Activated naive CD8-positive, alpha-beta T cell treated with anti-CD3 and anti-CD28 coated beads, Interleukin-2, amount 10 ng/mL, durations not matched to agents 7 days and 5 days (primary cell): ENCODE measurements at regions of chr7 and their contacts with region 1.

Region 1: GRCh38 chr7:48109848-48110663 is 21.0 kb downstream of the UPP1 start:
- DNase-seq: peak; percentile 89
- ATAC-seq: peak; percentile 89
- H3K4me3 Mint-ChIP-seq: no peak overlapping the region
- H3K27ac Mint-ChIP-seq: peak overlapping the region; percentile 64
- H3K4me1 Mint-ChIP-seq: peaks cover 12% of the 10 kb centered on the region
- H3K27me3 Mint-ChIP-seq: no peaks in the 10 kb centered on the region

Region 2: DNA sequence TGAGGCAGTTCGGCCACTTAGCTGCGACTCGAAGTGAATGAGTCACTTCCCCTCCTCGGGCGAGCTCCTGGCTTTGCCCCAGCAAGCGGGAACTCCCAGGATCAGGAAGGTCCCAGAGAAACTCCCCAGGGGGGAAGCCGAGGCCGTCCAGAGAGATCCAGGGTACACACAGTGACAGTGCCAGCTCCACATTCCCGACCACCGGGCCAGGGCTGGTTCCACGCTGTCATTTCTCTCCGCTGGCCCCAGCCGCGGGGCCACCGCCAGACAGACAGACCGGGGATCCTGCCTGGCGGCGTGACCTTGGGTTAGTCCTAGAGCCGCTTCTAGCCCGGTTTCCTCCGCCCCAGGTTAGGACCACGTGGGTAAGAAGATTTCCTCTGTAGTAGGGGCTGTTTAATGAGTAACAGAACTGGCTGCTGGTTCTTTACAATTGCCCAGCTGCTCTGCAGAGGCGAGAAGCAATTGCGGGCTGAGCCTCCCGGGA is 21.5 kb before region 1 on chr7:
- POLR2A ChIA-PET with region 1: interaction called, 13 read pairs
- DNase-seq: no peak
- ATAC-seq: peak; percentile 79
- H3K4me3 Mint-ChIP-seq: peak overlapping the region; percentile 82
- H3K27ac Mint-ChIP-seq: peak overlapping the region; percentile 94
- H3K4me1 Mint-ChIP-seq: peaks cover 54% of the 10 kb centered on the region
- H3K27me3 Mint-ChIP-seq: no peaks in the 10 kb centered on the region

Region 3: GRCh38 chr7:48182718-48183369 is 72.8 kb after region 1 on chr7:
- POLR2A ChIA-PET with region 1: no interaction called
- DNase-seq: no peak
- ATAC-seq: no peak
- H3K4me3 Mint-ChIP-seq: no peak overlapping the region
- H3K27ac Mint-ChIP-seq: no peak overlapping the region
- H3K4me1 Mint-ChIP-seq: no peaks in the 10 kb centered on the region
- H3K27me3 Mint-ChIP-seq: peaks cover 17% of the 10 kb centered on the region